ENCODE measurements at regions of chr12 and their contacts with region 1.

Region 1: GRCh38 chr12:48957141-48958048 is at the start of gene ARF3:
- DNase-seq: peak; percentile 79 to 97 (median 92)
- ATAC-seq: peak; percentile 94
- H3K4me3 ChIP-seq: peak within 1 kb of the TSS; percentile 68 to 97
- H3K4me3 Mint-ChIP-seq: peak within 1 kb of the TSS; percentile 97
- H3K27ac ChIP-seq: peak within 1 kb of the TSS; percentile 50 to 71
- H3K27ac Mint-ChIP-seq: peak within 1 kb of the TSS; percentile 86
- H3K4me1 ChIP-seq: peaks cover 19% of the 10 kb centered on the region
- H3K4me1 Mint-ChIP-seq: peaks cover 42% of the 10 kb centered on the region
- H3K27me3 ChIP-seq: no peaks in the 10 kb centered on the region
- H3K27me3 Mint-ChIP-seq: peaks cover 8% of the 10 kb centered on the region
- CTCF ChIP-seq: no peak
- total RNA-seq, gene ARF3: 34.7 to 36.4 TPM

Region 2: DNA sequence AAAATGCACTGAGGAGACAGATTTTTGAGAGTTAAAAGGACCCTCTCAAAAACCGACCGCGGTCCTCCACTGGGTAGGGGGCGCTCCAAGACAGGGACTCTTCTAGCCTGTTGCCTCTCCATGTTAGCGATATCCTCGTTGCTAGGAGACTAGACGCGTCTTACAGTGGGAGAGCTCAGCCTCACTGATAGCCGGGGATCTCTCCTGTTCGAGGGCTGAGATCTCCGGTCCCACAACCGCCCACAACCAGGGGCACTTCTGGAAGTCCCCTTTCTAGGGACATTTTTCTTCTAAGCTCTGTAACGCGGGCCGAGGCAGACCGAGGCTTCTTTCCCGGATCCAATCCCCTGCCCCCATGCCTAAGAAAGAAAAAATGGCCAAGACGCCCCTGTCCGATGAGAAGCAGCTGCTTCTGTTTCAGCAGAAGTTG is 53.4 kb before region 1 on chr12:
- CTCF ChIA-PET with region 1: interaction called, 12 read pairs
- POLR2A ChIA-PET with region 1: no interaction called
- intact Hi-C with region 1: no loop called
- DNase-seq: peak; percentile 68 to 93 (median 87)
- ATAC-seq: peak; percentile 99
- H3K4me3 ChIP-seq: peak overlapping the region; percentile 13 to 27
- H3K4me3 Mint-ChIP-seq: peak overlapping the region; percentile 79
- H3K27ac ChIP-seq: no peak overlapping the region
- H3K27ac Mint-ChIP-seq: no peak overlapping the region
- H3K4me1 ChIP-seq: peaks cover 4% of the 10 kb centered on the region
- H3K4me1 Mint-ChIP-seq: peaks cover 11% of the 10 kb centered on the region
- H3K27me3 ChIP-seq: no peaks in the 10 kb centered on the region
- H3K27me3 Mint-ChIP-seq: no peaks in the 10 kb centered on the region
- CTCF ChIP-seq: peak; percentile 79

Region 3: DNA sequence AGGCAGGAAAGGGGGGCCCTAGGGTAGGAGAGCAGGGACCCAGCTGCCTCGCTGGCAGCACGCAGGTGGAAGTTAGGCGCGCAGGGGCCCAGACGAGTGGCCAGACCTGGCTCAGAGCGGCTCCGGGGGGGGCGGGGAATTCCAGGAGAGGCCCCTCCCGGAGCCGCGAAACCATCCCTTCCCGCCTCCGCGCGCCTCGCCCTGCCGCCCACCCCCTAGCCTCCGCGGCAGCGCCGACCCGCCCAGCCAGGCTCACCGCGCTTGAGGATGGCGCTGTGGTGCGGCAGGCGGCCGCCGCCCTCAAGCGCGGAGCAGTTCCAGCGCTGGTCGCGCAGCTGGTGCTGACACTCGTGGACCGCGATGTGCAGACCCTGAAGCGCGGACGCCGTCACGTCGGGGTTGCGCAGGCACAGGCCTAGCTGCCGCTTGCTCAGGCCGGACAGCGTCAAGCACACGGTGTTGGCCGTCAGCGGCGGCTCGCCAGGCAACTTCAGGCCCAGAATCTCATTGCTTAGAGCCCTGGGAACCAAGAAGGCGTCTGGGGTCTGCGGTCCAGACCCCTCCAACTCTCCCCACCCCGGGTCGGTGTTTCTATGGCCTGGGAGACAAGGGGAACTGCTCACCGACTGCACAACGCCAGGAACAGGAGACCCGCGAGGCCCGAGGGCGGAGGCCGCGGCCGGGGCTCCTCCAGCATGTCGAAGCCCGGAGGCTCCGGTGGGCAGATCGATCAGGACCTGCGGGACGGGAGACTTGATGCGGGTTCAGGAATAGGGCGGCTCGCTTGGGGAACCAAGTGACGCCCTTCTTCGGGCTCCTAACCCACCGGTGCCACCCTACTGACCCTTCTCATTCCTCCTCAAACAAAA is 12.7 kb after region 1 on chr12:
- CTCF ChIA-PET with region 1: interaction called, 13 read pairs
- POLR2A ChIA-PET with region 1: interaction called, 6 read pairs
- intact Hi-C with region 1: no loop called
- DNase-seq: peak in 5 of 9 experiments; percentile 25 to 75 (median 62)
- ATAC-seq: peak; percentile 65
- H3K4me3 ChIP-seq: peak overlapping the region; percentile 6 to 21
- H3K4me3 Mint-ChIP-seq: peak overlapping the region; percentile 71
- H3K27ac ChIP-seq: no peak overlapping the region
- H3K27ac Mint-ChIP-seq: no peak overlapping the region
- H3K4me1 ChIP-seq: peaks cover 31% of the 10 kb centered on the region
- H3K4me1 Mint-ChIP-seq: peaks cover 21% of the 10 kb centered on the region
- H3K27me3 ChIP-seq: peaks cover 36 to 37% of the 10 kb centered on the region in 2 experiments
- H3K27me3 Mint-ChIP-seq: peaks cover 38% of the 10 kb centered on the region
- CTCF ChIP-seq: no peak

Region 4: DNA sequence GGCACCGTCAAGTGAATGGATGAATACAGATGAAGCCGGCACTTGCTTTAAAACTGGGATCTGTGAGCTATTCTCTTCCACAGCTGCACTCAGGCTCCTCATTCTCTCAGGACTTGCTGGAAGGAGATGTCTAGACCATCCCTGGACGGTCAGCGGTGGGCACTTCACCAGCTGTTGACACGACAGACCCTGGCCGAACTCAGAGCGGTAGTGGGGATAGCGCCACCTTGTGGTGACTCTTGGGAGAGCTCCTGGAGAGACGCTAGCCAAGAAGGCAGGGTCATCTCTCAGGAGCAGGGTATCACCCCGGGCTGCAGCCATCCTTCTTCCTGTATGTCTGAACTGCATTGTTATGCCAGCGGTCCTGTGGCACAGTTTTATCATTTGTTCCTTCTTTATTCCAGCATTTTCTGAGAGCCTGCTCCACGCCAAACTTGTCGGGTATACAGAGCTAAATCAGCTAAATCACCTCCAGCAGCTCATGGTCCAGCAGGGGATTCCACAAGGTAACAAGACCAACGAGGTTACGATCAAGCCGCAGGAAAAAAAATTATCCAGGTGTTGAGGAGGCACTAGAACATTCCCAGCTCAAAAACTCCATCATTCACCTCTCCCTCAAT is 30.7 kb after region 1 on chr12:
- CTCF ChIA-PET with region 1: interaction called, 16 read pairs
- POLR2A ChIA-PET with region 1: interaction called, 5 read pairs
- intact Hi-C with region 1: no loop called
- DNase-seq: peak in 8 of 9 experiments; percentile 58 to 84 (median 78)
- ATAC-seq: peak; percentile 84
- H3K4me3 ChIP-seq: no peak overlapping the region
- H3K4me3 Mint-ChIP-seq: no peak overlapping the region
- H3K27ac ChIP-seq: no peak overlapping the region
- H3K27ac Mint-ChIP-seq: no peak overlapping the region
- H3K4me1 ChIP-seq: no peaks in the 10 kb centered on the region
- H3K4me1 Mint-ChIP-seq: peaks cover 5% of the 10 kb centered on the region
- H3K27me3 ChIP-seq: peaks cover 0 to 7% of the 10 kb centered on the region in 2 experiments
- H3K27me3 Mint-ChIP-seq: peaks cover 24% of the 10 kb centered on the region
- CTCF ChIP-seq: peak; percentile 81

Region 5: GRCh38 chr12:49170924-49171323 is 213.5 kb after region 1 on chr12:
- CTCF ChIA-PET with region 1: no interaction called
- POLR2A ChIA-PET with region 1: no interaction called
- intact Hi-C with region 1: no loop called
- DNase-seq: no peak
- ATAC-seq: no peak
- H3K4me3 ChIP-seq: no peak overlapping the region
- H3K4me3 Mint-ChIP-seq: no peak overlapping the region
- H3K27ac ChIP-seq: no peak overlapping the region
- H3K27ac Mint-ChIP-seq: no peak overlapping the region
- H3K4me1 ChIP-seq: no peaks in the 10 kb centered on the region
- H3K4me1 Mint-ChIP-seq: no peaks in the 10 kb centered on the region
- H3K27me3 ChIP-seq: no peaks in the 10 kb centered on the region
- H3K27me3 Mint-ChIP-seq: no peaks in the 10 kb centered on the region
- CTCF ChIP-seq: no peak

Measured in CD8-positive, alpha-beta T cell (primary cell).